HepG2 (cell line): ENCODE measurements at regions of chr2 and their contacts with region 1.

Region 1: DNA sequence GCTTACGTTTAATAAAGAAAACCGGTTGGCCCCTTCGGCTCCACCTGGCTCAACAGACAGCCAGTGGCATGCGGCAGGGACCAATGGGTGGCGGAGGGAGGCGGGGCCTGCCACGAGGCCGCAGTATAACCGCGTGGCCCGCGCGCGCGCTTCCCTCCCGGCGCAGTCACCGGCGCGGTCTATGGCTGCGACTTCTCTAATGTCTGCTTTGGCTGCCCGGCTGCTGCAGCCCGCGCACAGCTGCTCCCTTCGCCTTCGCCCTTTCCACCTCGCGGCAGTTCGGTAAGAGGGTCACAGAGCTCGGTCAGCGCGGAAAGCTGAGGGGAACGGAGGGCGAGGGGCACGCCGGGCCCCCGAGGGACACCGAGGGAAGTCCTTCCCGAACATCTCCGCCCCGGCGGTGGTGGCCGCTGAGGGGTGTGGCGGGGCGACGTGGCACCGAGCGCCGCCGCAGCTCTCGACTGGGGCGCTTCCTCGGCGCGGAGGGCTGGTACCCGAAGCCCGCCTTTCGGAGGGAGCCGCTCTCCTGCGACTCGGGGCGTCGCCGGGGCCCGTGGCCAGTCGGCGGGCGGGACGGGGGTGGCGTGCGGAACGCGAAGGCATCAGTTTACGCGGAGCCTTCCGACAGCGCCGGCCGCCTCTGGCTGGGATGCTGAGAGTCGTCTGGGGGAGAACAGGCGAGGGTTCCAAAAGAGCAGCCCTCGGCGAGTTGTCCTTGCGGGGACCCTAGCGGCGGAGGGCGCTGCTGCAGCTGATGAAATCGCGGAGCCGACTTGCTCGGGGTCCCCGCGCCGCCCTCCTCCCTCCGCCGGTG is at the start of gene MTHFD2:
- DNase-seq: peak; percentile 97
- ATAC-seq: peak; percentile 94
- H3K4me3 ChIP-seq: peak within 1 kb of the TSS; percentile 72 to 80 (median 78)
- H3K27ac ChIP-seq: peak within 1 kb of the TSS; percentile 94
- H3K4me1 ChIP-seq: peaks cover 60% of the 10 kb centered on the region
- H3K27me3 ChIP-seq: no peaks in the 10 kb centered on the region; a peak in 1 of 5 replicates
- CTCF ChIP-seq: peak; percentile 85
- EP300 ChIP-seq: peak in 1 of 2 experiments; percentile 42; a peak in 1 of 4 replicates
- POLR2A ChIP-seq: peak; percentile 96 to 99
- RAD21 ChIP-seq: peak; percentile 58; the same call in 1 of the 2 replicates
- total RNA-seq, gene MTHFD2: 188 and 281 TPM in 2 replicates

Region 2: GRCh38 chr2:74025971-74026612 is 172.6 kb before region 1 on chr2:
- CTCF ChIA-PET with region 1: no interaction called
- POLR2A ChIA-PET with region 1: no interaction called
- in situ Hi-C with region 1: no loop called
- intact Hi-C with region 1: no loop called
- DNase-seq: no peak
- ATAC-seq: peak; percentile 83
- H3K4me3 ChIP-seq: no peak overlapping the region
- H3K27ac ChIP-seq: no peak overlapping the region
- H3K4me1 ChIP-seq: peaks cover 17% of the 10 kb centered on the region
- H3K27me3 ChIP-seq: no peaks in the 10 kb centered on the region
- CTCF ChIP-seq: no peak
- EP300 ChIP-seq: no peak
- POLR2A ChIP-seq: no peak
- RAD21 ChIP-seq: no peak

Region 3: GRCh38 chr2:74147727-74148456 is 50.8 kb before region 1 on chr2 and contains the start of gene BOLA3:
- CTCF ChIA-PET with region 1: no interaction called
- POLR2A ChIA-PET with region 1: interaction called, 5 read pairs
- in situ Hi-C with region 1: no loop called
- intact Hi-C with region 1: loop called (anchors 5 kb)
- DNase-seq: peak; percentile 78
- ATAC-seq: peak; percentile 94
- H3K4me3 ChIP-seq: peak within 1 kb of the TSS; percentile 84 to 95 (median 94)
- H3K27ac ChIP-seq: peak within 1 kb of the TSS; percentile 72
- H3K4me1 ChIP-seq: peaks cover 33% of the 10 kb centered on the region
- H3K27me3 ChIP-seq: no peaks in the 10 kb centered on the region; a peak in 1 of 5 replicates
- CTCF ChIP-seq: peak; percentile 84
- EP300 ChIP-seq: peak in 1 of 2 experiments; percentile 17; a peak in 2 of 4 replicates
- POLR2A ChIP-seq: peak; percentile 92 to 96
- RAD21 ChIP-seq: peak; percentile 82
- total RNA-seq, gene BOLA3: 170 and 172 TPM in 2 replicates

Region 4: GRCh38 chr2:74178201-74179062 is 20.2 kb before region 1 on chr2 and contains the start of gene MOB1A:
- CTCF ChIA-PET with region 1: no interaction called
- POLR2A ChIA-PET with region 1: interaction called, 53 read pairs
- in situ Hi-C with region 1: no loop called
- intact Hi-C with region 1: loop called (anchors 2 kb)
- DNase-seq: peak; percentile 98
- ATAC-seq: peak; percentile 98
- H3K4me3 ChIP-seq: peak within 1 kb of the TSS; percentile 66 to 91 (median 82)
- H3K27ac ChIP-seq: peak within 1 kb of the TSS; percentile 96
- H3K4me1 ChIP-seq: peaks cover 43% of the 10 kb centered on the region
- H3K27me3 ChIP-seq: no peaks in the 10 kb centered on the region; a peak in 1 of 5 replicates
- CTCF ChIP-seq: no peak; the same call in 1 of the 2 replicates
- EP300 ChIP-seq: no peak
- POLR2A ChIP-seq: peak; percentile 88 to 92; a peak in 3 of 4 replicates
- RAD21 ChIP-seq: peak; percentile 56
- total RNA-seq, gene MOB1A: 139 and 217 TPM in 2 replicates

Region 5: GRCh38 chr2:74188018-74188601 is 10.6 kb before region 1 on chr2:
- CTCF ChIA-PET with region 1: no interaction called
- POLR2A ChIA-PET with region 1: interaction called, 11 read pairs
- in situ Hi-C with region 1: no loop called
- intact Hi-C with region 1: no loop called
- DNase-seq: peak; percentile 33
- ATAC-seq: peak; percentile 72
- H3K4me3 ChIP-seq: peak overlapping the region in 1 of 3 experiments; percentile 45; a peak in 2 of 6 replicates
- H3K27ac ChIP-seq: no peak overlapping the region
- H3K4me1 ChIP-seq: peaks cover 29% of the 10 kb centered on the region
- H3K27me3 ChIP-seq: no peaks in the 10 kb centered on the region
- CTCF ChIP-seq: no peak
- EP300 ChIP-seq: no peak
- POLR2A ChIP-seq: no peak
- RAD21 ChIP-seq: no peak

Region 6: GRCh38 chr2:74216642-74217041 is 18.0 kb after region 1 on chr2:
- CTCF ChIA-PET with region 1: no interaction called
- POLR2A ChIA-PET with region 1: interaction called, 12 read pairs
- in situ Hi-C with region 1: no loop called
- intact Hi-C with region 1: no loop called
- DNase-seq: no peak
- ATAC-seq: no peak
- H3K4me3 ChIP-seq: no peak overlapping the region
- H3K27ac ChIP-seq: no peak overlapping the region
- H3K4me1 ChIP-seq: peaks cover 16% of the 10 kb centered on the region
- H3K27me3 ChIP-seq: no peaks in the 10 kb centered on the region
- CTCF ChIP-seq: no peak
- EP300 ChIP-seq: no peak
- POLR2A ChIP-seq: no peak; a peak in 1 of 4 replicates
- RAD21 ChIP-seq: no peak

Region 7: DNA sequence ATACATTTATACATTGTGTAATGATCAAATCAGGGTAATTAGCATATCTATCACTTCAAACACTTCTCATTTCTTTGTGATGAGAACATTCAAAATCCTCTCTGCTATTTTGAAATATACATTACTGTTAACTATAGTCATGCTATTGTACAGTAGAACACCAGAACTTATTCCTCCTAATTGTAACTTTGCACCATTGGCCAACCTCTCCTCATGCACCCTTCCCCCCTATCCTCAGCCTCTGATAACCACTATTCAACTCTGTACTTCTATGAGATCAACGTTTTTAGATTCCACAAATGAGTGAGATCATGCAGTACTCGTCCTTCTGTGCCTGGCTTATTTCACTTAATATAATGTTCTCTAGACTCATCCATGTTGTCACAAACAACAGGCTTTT is 410.3 kb after region 1 on chr2:
- CTCF ChIA-PET with region 1: no interaction called
- POLR2A ChIA-PET with region 1: no interaction called
- in situ Hi-C with region 1: no loop called
- intact Hi-C with region 1: no loop called
- DNase-seq: no peak
- ATAC-seq: no peak
- H3K4me3 ChIP-seq: no peak overlapping the region
- H3K27ac ChIP-seq: no peak overlapping the region
- H3K4me1 ChIP-seq: no peaks in the 10 kb centered on the region
- H3K27me3 ChIP-seq: 0 out of 5 replicates have a peak, but pooled peaks cover 0 to 7% of the 10 kb centered on the region in 2 experiments
- CTCF ChIP-seq: no peak
- EP300 ChIP-seq: no peak
- POLR2A ChIP-seq: no peak
- RAD21 ChIP-seq: no peak